ENCODE measurements at regions of chr11 and their contacts with region 1.

Region 1: DNA sequence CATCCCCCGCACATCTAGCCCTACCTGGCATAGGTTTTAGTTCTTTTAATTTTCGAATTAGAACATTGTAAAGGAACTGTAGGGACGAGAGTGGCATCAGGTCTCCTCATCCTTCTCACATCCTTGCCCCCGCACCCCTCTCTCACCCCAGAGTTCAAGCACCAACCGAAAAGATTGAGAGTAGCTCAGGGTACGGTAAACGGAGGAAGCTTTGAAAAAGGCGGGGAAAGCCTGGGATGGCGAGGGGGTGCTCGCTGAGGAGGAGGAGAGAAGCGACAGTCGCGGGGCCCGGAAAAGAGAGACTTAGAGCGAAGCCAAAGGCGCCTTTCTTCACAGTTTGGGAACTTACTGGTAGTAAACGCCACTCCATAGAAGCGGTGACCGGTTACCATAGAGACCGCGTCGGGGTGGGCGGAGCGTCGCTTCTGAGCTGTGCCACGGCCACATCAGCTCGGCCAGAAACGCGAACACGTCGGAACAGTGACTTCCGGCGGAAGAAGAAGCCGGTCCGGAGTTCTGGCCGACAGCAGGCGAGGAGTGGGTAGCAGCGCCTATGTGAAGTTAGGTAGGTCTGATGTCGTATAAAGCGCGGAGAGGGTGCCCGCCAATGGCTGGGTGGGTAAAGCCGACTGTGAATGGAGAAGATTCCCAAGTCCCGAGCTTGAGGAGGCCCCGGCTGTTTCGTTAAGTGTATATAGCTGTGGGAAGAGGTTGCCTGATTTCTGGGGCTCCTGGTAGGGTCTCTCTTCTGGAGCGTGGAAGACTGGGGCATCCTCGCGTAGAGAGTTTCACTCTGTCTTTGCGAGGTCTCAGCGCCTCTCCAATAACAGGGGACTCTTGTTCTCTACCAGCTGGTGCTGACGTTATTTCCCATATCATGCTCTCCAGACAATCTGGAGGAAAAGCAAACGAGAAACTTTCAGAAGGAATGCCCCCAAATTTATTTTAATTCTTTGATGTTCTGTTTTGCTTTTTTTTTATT is at the starts of genes DCDC1 and DNAJC24:
- DNase-seq: peak; percentile 81
- CTCF ChIP-seq: no peak

Region 2: GRCh38 chr11:31809857-31810778 is 440.5 kb after region 1 on chr11:
- in situ Hi-C with region 1: loop called (anchors 10 kb)
- DNase-seq: peak; percentile 46
- CTCF ChIP-seq: no peak